Kidney (tissue), 22 donors: ENCODE measurements at regions of chr1 and their contacts with region 1.

Region 1: GRCh38 chr1:47449822-47450552 is 12.1 kb downstream of the FOXD2 start:
- DNase-seq: no peak
- H3K4me3 ChIP-seq: no peak overlapping the region
- H3K27ac ChIP-seq: no peak overlapping the region
- H3K4me1 ChIP-seq: no peaks in the 10 kb centered on the region
- H3K27me3 ChIP-seq: peaks cover 17% of the 10 kb centered on the region
- CTCF ChIP-seq: no peak

Region 2: GRCh38 chr1:47487850-47488450 is 38.0 kb after region 1 on chr1:
- intact Hi-C with region 1: no loop called
- DNase-seq: peak in 1 of 5 donors; percentile 11
- H3K4me3 ChIP-seq: no peak overlapping the region
- H3K27ac ChIP-seq: no peak overlapping the region
- H3K4me1 ChIP-seq: no peaks in the 10 kb centered on the region
- H3K27me3 ChIP-seq: no peaks in the 10 kb centered on the region
- CTCF ChIP-seq: no peak

Region 3: DNA sequence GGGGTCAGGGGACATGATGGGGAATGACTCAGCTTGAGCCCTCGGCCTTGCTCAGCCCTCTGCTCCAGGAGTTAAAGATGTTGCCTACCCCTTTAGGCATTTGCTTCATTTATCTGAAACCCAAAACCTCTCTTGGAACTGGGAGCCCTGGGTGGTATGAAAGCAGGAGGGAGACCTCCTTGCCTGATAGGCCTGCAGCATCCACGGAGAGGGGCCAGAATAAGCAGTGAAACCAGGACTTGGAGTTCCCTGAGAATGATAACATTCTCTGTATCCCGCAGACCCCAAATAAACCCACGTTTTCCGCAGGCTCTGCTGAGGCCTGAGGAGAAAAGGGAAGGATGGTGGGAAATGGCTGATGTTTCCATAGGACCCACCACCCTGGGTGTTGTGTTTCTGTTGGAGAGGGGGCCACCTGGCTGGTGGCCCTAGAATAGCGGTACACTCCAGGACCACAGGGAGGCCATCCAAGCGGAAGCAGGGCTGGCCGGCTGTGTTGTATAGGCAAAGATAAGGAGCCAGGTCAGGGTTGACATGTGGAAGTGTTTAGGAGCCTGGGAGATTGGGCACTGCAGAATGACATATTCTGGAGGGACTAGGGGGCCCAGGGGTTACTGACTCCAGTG is 65.3 kb after region 1 on chr1:
- intact Hi-C with region 1: loop called (anchors 10 kb)
- DNase-seq: peak in 2 of 5 donors; percentile 33 to 37
- H3K4me3 ChIP-seq: no peak overlapping the region
- H3K27ac ChIP-seq: no peak overlapping the region
- H3K4me1 ChIP-seq: no peaks in the 10 kb centered on the region
- H3K27me3 ChIP-seq: no peaks in the 10 kb centered on the region
- CTCF ChIP-seq: no peak

Region 4: GRCh38 chr1:47587891-47588582 is 138.1 kb after region 1 on chr1:
- intact Hi-C with region 1: no loop called
- DNase-seq: peak; percentile 71 to 86 (median 84)
- H3K4me3 ChIP-seq: no peak overlapping the region
- H3K27ac ChIP-seq: no peak overlapping the region
- H3K4me1 ChIP-seq: no peaks in the 10 kb centered on the region
- H3K27me3 ChIP-seq: peaks cover 3% of the 10 kb centered on the region
- CTCF ChIP-seq: no peak

Region 5: DNA sequence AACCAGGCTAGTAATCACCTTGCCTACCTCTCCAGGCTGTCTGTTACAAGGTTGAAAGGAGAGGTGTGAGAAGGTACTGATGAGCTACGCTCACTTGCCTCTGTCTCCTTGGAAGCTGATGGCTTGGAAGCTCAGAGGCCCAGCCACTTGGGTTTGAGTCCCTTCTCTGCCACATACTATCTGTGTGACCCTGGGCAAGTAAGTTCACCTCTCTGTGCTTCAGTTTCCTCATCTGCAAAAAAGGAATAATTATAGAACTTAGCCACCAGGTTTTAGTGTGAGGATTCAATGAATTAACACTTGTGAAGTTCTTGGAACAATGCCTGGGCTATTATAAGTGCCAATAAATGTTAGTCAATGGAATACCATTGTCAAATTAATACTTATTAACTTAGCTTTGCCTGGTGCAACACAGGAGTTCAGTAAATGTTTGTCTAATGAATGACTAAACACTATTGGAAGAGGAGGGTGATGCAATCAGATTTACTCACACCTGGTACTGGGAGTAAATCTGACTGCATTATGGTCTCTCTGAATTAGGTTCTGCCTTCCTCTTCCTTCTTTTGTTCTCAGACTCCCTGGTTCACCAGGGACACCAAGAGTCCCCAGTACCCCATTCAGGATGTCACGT is 491.7 kb after region 1 on chr1:
- intact Hi-C with region 1: no loop called
- DNase-seq: peak in 1 of 5 donors; percentile 5
- H3K4me3 ChIP-seq: no peak overlapping the region
- H3K27ac ChIP-seq: no peak overlapping the region
- H3K4me1 ChIP-seq: peaks cover 0 to 31% (median 18%) of the 10 kb centered on the region in 3 donors
- H3K27me3 ChIP-seq: no peaks in the 10 kb centered on the region
- CTCF ChIP-seq: no peak